ENCODE measurements at regions of chr17 and their contacts with region 1.

Region 1: GRCh38 chr17:16589097-16589969 is 20.3 kb upstream of the ZNF287 start:
- DNase-seq: peak; percentile 89 to 94 (median 90)
- H3K4me3 ChIP-seq: peak overlapping the region; percentile 53 to 98 (median 76)
- H3K27ac ChIP-seq: peak overlapping the region in 58 of 59 donors; percentile 13 to 95 (median 82)
- H3K27me3 ChIP-seq: no peaks in the 10 kb centered on the region
- CTCF ChIP-seq: peak; percentile 96 to 100 (median 99)

Region 2: GRCh38 chr17:16380640-16381495 is 208.5 kb before region 1 on chr17 and contains the start of gene UBB:
- intact Hi-C with region 1: loop called in 1 of 2 experiments (anchors 5 kb)
- DNase-seq: peak; percentile 90 to 97 (median 96)
- H3K4me3 ChIP-seq: peak within 1 kb of the TSS; percentile 64 to 93 (median 80)
- H3K27ac ChIP-seq: peak within 1 kb of the TSS; percentile 84 to 100 (median 99)
- H3K27me3 ChIP-seq: no peaks in the 10 kb centered on the region
- CTCF ChIP-seq: peak in 9 of 56 donors; percentile 4 to 45 (median 9)
- total RNA-seq, gene UBB: 963 to 2,431 (median 1,830) TPM

Region 3: GRCh38 chr17:16506188-16506587 is 83.1 kb before region 1 on chr17:
- intact Hi-C with region 1: no loop called
- DNase-seq: no peak
- H3K4me3 ChIP-seq: no peak overlapping the region
- H3K27ac ChIP-seq: no peak overlapping the region
- H3K27me3 ChIP-seq: no peaks in the 10 kb centered on the region
- CTCF ChIP-seq: no peak

Region 4: DNA sequence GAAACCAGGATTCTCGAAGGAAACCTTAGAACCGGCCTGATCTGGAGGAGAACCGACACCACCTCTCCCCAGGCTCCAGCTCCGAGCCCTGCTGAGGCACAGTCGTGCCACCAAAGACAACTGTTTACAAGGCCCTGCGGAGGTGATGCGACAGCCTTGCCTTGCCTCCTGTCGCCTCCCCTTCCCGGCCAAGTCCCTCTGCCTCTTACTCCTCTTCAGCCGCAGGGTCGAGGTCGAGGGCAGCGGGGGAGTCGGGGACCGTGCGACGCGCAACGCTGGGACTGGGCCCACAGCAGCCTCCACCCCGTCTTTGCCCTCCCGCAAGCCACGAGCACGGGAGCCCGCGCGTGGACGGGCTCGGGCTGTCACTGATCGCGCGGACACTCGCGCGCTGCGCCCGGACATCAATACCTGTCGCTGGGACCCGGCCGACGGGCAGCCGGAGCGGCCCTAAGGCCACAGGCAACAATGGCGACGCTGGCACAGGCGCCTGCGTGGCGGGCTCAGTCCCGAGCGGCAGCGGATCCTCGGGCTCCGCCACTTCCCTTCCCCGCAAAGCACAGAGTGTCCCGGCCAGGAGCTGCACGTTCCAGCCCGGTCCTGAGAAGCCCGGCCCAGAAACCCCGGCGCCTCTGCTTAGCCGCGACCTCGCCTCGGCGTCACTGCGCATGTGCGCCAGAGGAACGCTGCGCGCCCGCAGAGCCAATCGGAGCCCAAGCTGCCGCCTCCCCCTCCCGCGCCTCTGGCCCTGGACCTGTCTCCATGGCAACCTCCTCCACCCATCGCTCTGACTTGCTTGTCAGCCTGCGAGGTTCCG is 20.6 kb before region 1 on chr17 and contains the start of gene ZNF287:
- intact Hi-C with region 1: loop called (anchors 2 kb)
- DNase-seq: peak; percentile 94 to 98 (median 96)
- H3K4me3 ChIP-seq: peak within 1 kb of the TSS; percentile 60 to 100 (median 91)
- H3K27ac ChIP-seq: peak within 1 kb of the TSS in 57 of 59 donors; percentile 23 to 93 (median 84)
- H3K27me3 ChIP-seq: no peaks in the 10 kb centered on the region
- CTCF ChIP-seq: peak in 36 of 56 donors; percentile 8 to 61 (median 30)
- total RNA-seq, gene ZNF287: 9.2 to 29.9 (median 15.2) TPM

Region 5: GRCh38 chr17:16653209-16654041 is 64.1 kb after region 1 on chr17 and contains the start of gene ZNF624:
- intact Hi-C with region 1: loop called in 1 of 2 experiments (anchors 2 kb)
- DNase-seq: peak; percentile 83 to 92 (median 88)
- H3K4me3 ChIP-seq: peak within 1 kb of the TSS; percentile 49 to 98 (median 85)
- H3K27ac ChIP-seq: peak within 1 kb of the TSS; percentile 72 to 99 (median 95)
- H3K27me3 ChIP-seq: no peaks in the 10 kb centered on the region
- CTCF ChIP-seq: peak in 29 of 56 donors; percentile 6 to 57 (median 34)
- total RNA-seq, gene ZNF624: 3.7 to 16.0 (median 9.3) TPM